Left lung (tissue), 14 donors: ENCODE measurements at regions of chr11 and their contacts with region 1.

Region 1: DNA sequence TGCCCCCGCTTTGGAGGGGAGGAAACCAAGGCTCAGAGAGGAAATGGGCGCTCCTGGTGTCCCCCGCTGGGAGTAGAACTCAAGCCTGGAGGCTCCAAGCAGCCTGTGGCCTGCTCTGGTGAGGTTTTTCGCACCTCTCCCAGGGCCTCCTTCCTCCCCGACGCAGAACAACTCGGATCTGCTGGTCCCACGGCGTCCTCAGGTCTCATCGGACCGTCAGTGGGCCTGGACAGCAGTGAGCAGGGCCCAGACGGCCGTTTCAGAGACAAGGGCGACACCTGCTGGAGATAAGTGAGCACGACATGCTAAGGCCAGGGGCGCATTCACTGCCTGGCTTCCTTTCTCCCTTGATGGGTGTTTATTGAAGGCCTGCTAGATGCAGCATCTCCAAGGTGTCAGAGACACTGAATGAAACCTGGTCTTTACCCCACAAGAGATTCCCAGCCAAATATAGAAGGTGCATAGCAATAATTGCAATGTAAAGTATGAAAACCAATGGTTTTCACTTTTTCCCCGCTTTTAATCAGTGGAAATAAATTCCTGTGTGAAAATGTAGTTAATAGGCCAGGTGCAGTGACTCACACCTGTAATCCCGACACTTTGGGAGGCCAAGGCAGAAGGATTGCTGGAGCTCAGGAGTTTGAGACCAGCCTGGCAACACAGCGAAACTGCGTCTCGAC is 26.9 kb upstream of the CD82 start:
- DNase-seq: peak; percentile 69 to 91 (median 74)
- ATAC-seq: peak; percentile 99
- H3K4me3 ChIP-seq: no peak overlapping the region
- H3K27ac ChIP-seq: no peak overlapping the region
- H3K4me1 ChIP-seq: peaks cover 0 to 4% of the 10 kb centered on the region in 2 donors
- H3K27me3 ChIP-seq: peaks cover 0 to 14% of the 10 kb centered on the region in 2 donors
- CTCF ChIP-seq: peak; percentile 98 to 100

Region 2: DNA sequence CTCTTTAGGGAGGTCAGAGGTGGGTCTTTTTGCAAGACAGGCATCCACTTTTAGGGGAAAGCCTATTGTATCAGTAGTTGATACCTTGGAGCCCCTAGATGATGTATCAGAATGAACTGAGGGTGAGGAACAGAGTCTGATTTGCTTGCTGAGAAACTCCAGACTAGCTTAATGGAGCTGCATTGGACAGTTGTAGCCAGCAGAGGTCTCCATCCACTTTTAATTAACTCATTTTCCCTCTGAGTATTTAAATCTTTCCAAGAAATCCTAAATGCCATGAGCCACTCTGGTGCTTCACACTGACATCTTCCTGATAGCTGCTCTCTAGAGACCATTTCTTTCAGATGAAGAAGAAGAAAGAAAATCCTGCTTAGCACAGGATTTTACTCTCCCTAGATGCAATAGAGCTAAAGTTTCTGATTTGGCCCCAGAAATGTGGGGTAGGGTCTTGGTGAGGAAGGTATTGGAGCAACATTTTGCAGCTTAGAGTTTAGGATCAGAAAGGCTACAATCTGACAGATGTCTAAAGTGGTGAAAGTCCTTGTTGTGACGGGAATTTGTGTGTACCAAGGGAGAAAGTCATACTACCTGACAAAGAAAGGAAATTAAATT is 405.1 kb before region 1 on chr11:
- intact Hi-C with region 1: loop called in 1 of 2 experiments (anchors 10 kb)
- DNase-seq: peak in 1 of 4 donors; percentile 54
- ATAC-seq: peak; percentile 61
- H3K4me3 ChIP-seq: no peak overlapping the region
- H3K27ac ChIP-seq: no peak overlapping the region
- H3K4me1 ChIP-seq: no peaks in the 10 kb centered on the region
- H3K27me3 ChIP-seq: no peaks in the 10 kb centered on the region
- CTCF ChIP-seq: peak; percentile 39 to 47

Region 3: GRCh38 chr11:44286268-44286880 is 252.1 kb before region 1 on chr11:
- intact Hi-C with region 1: loop called in 1 of 2 experiments (anchors 5 kb)
- DNase-seq: peak in 2 of 4 donors; percentile 54 to 59
- ATAC-seq: peak; percentile 92
- H3K4me3 ChIP-seq: no peak overlapping the region
- H3K27ac ChIP-seq: no peak overlapping the region
- H3K4me1 ChIP-seq: no peaks in the 10 kb centered on the region
- H3K27me3 ChIP-seq: no peaks in the 10 kb centered on the region
- CTCF ChIP-seq: peak; percentile 95 to 96

Region 4: GRCh38 chr11:44488165-44488965 is 50.1 kb before region 1 on chr11:
- intact Hi-C with region 1: no loop called
- DNase-seq: peak in 2 of 4 donors; percentile 34 to 52
- ATAC-seq: no peak
- H3K4me3 ChIP-seq: no peak overlapping the region
- H3K27ac ChIP-seq: no peak overlapping the region
- H3K4me1 ChIP-seq: no peaks in the 10 kb centered on the region
- H3K27me3 ChIP-seq: no peaks in the 10 kb centered on the region
- CTCF ChIP-seq: no peak

Region 5: GRCh38 chr11:44694443-44694842 is 155.9 kb after region 1 on chr11:
- intact Hi-C with region 1: no loop called
- DNase-seq: no peak
- ATAC-seq: no peak
- H3K4me3 ChIP-seq: no peak overlapping the region
- H3K27ac ChIP-seq: no peak overlapping the region
- H3K4me1 ChIP-seq: no peaks in the 10 kb centered on the region
- H3K27me3 ChIP-seq: no peaks in the 10 kb centered on the region
- CTCF ChIP-seq: no peak